Sigmoid colon (tissue), 7 donors: ENCODE measurements at regions of chr15 and their contacts with region 1.

Region 1: GRCh38 chr15:58987489-58988005 is at the start of gene RNF111:
- DNase-seq: peak; percentile 95
- H3K4me3 ChIP-seq: peak within 1 kb of the TSS; percentile 86 to 95 (median 90)
- H3K27ac ChIP-seq: peak within 1 kb of the TSS; percentile 90 to 96 (median 92)
- H3K4me1 ChIP-seq: peaks cover 0 to 34% (median 26%) of the 10 kb centered on the region in 4 donors
- H3K27me3 ChIP-seq: no peaks in the 10 kb centered on the region
- CTCF ChIP-seq: no peak
- EP300 ChIP-seq: no peak
- POLR2A ChIP-seq: peak; percentile 86 to 87
- total RNA-seq, gene RNF111: 15.0 to 28.6 (median 20.8) TPM

Region 2: GRCh38 chr15:59104912-59105732 is 117.6 kb after region 1 on chr15 and contains the start of gene CCNB2:
- intact Hi-C with region 1: loop called (anchors 5 kb)
- DNase-seq: peak; percentile 89
- H3K4me3 ChIP-seq: peak within 1 kb of the TSS; percentile 32 to 60 (median 52)
- H3K27ac ChIP-seq: peak within 1 kb of the TSS in 3 of 4 donors; percentile 34 to 60 (median 56)
- H3K4me1 ChIP-seq: peaks cover 0 to 8% (median 7%) of the 10 kb centered on the region in 4 donors
- H3K27me3 ChIP-seq: no peaks in the 10 kb centered on the region
- CTCF ChIP-seq: no peak
- EP300 ChIP-seq: no peak
- POLR2A ChIP-seq: no peak
- total RNA-seq, gene CCNB2: 0.33 to 1.9 (median 0.36) TPM in 3 of 4 donors, not detected in the other

Region 3: GRCh38 chr15:59138243-59138642 is 150.7 kb after region 1 on chr15:
- intact Hi-C with region 1: no loop called
- DNase-seq: no peak
- H3K4me3 ChIP-seq: no peak overlapping the region
- H3K27ac ChIP-seq: no peak overlapping the region
- H3K4me1 ChIP-seq: no peaks in the 10 kb centered on the region
- H3K27me3 ChIP-seq: no peaks in the 10 kb centered on the region
- CTCF ChIP-seq: peak in 2 of 4 experiments; percentile 19 to 24
- EP300 ChIP-seq: no peak
- POLR2A ChIP-seq: no peak

Region 4: GRCh38 chr15:59437817-59438562 is 450.4 kb after region 1 on chr15 and contains the start of gene FAM81A:
- intact Hi-C with region 1: loop called (anchors 2 kb)
- DNase-seq: peak; percentile 94
- H3K4me3 ChIP-seq: peak within 1 kb of the TSS; percentile 33 to 59 (median 52)
- H3K27ac ChIP-seq: peak within 1 kb of the TSS in 3 of 4 donors; percentile 27 to 58 (median 30)
- H3K4me1 ChIP-seq: peaks cover 0 to 17% (median 16%) of the 10 kb centered on the region in 4 donors
- H3K27me3 ChIP-seq: no peaks in the 10 kb centered on the region
- CTCF ChIP-seq: no peak
- EP300 ChIP-seq: no peak
- POLR2A ChIP-seq: no peak
- total RNA-seq, gene FAM81A: 1.8 to 4.7 (median 2.1) TPM in 3 of 4 donors, not detected in the other